Right ventricle myocardium inferior (tissue), 1 donor: ENCODE measurements at regions of chr14 and their contacts with region 1.

Region 1: DNA sequence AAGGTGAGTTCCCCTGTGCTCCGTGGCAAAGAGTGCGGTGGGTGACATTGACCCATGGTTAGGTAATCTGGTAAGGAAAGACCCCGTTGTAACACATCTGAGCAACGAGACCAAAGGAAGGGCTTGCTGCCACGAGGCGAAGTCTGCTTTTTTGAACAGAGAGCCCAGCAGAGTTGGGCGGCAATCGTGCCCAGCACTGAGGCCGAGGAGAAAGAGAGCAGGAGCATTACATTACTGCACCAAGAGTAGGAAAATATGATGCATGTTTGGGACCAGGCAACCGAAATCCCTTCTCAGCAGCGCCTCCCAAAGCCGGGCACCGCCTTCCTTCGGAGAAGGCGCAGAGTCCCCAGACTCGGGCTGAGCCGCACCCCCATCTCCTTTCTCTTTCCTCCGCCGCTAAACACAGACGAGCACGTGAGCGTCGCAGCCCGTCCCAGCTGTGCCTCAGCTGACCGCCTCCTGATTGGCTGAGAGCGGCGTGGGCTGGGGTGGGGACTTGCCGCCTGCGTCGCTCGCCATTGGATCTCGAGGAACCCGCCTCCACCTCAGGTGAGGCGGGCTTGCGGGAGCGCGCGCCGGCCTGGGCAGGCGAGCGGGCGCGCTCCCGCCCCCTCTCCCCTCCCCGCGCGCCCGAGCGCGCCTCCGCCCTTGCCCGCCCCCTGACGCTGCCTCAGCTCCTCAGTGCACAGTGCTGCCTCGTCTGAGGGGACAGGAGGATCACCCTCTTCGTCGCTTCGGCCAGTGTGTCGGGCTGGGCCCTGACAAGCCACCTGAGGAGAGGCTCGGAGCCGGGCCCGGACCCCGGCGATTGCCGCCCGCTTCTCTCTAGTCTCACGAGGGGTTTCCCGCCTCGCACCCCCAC is at the start of gene HIF1A:
- DNase-seq: peak; percentile 99
- ATAC-seq: peak; percentile 98
- total RNA-seq, gene HIF1A: 53.4 TPM

Region 2: DNA sequence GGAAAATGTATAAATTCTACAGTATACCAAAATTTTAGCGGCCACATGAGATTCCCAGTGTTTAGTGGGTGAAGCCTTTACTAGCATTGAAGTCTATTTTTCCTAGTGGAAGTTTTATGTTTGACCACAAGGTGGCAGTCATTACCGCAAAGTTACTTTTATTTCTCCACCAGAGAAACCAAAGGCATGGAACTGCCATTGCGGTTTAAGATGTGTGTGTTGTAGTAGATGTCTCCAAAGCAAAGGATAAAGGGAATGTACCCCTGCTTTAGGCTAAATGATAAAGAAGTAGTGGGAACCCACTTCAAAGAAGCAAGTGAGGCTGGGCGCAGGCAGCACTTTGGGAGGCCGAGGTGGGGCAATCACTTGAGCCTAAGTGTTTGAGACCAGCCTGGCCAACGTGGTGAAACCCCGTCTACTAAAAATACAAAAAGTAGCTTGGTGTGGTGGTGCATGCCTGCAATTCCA is 233.2 kb before region 1 on chr14:
- intact Hi-C with region 1: loop called (anchors 2 kb)
- DNase-seq: no peak
- ATAC-seq: no peak

Region 3: DNA sequence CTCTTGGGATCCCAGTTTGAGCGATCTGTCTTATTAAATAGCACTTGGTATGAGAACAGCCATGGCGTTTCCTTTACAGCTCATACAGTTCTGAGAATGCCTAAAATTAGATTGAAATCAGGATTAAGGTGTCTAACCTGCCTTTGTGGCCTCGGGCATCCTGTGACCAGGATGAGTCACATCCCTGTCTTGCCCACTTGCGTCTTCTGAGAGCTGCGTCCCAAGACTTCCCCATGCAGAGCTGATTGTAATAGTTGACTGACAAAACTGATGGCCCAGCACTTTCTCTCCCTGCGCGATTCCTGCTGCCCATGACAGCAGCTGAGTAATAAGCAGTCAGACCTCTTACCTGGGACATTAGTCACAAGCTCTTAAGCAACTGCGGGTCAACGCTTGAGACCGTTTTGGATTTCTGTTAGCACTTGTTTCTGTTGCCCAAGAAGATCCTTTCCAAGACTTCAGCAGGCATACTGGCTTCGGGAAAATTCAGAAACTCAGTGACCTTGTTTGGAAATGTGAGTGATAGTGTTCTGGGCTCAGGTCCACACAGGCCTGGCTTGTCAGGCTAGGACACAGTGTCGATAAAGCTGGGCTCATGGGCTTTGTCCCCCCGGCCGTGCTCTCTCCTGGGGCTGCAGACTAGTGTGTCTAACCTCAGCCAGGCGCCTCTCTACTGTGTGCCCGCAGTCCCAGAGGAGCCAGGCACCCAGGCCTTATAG is 169.6 kb before region 1 on chr14:
- intact Hi-C with region 1: loop called (anchors 5 kb)
- DNase-seq: no peak
- ATAC-seq: peak; percentile 87

Region 4: DNA sequence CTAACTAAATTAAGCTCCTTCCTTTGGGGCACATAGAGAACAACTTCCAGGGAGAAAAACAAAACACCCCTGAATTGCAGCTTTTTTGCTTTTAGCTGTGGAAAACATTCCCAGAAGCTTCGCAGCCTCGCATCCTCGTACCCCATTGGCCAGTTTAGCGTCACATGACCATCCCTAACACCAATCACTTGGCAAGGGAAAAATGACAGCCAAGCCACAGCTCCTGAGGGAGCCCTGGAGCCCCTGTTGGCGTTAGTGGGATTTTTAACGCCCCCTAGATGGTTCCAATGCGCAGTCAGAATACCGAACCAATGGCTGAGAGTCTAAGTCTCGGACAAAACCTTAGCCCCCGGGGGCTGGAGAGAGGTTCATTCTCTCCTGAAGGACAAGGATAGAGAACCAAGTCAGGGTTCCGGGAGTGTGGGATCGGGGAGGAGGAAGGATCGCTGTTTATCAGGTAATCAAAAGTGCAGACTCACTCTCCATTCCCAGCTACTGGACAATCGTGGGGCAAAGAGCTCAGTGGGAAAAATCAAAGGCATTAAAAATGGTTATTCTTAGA is 135.3 kb before region 1 on chr14:
- intact Hi-C with region 1: loop called (anchors 1 kb)
- DNase-seq: no peak
- ATAC-seq: no peak

Region 5: GRCh38 chr14:61585598-61586543 is 109.2 kb before region 1 on chr14:
- intact Hi-C with region 1: loop called (anchors 5 kb)
- DNase-seq: peak; percentile 79
- ATAC-seq: peak; percentile 47

Region 6: GRCh38 chr14:61750708-61751474 is 55.8 kb after region 1 on chr14:
- intact Hi-C with region 1: loop called (anchors 5 kb)
- DNase-seq: peak; percentile 95
- ATAC-seq: peak; percentile 98